Posterior cingulate gyrus (tissue), 11 donors: ENCODE measurements at regions of chr11 and their contacts with region 1.

Region 1: GRCh38 chr11:44727373-44728287 is 868 bp downstream of the TSPAN18 start:
- DNase-seq: peak; percentile 61 to 97 (median 79)

Region 2: DNA sequence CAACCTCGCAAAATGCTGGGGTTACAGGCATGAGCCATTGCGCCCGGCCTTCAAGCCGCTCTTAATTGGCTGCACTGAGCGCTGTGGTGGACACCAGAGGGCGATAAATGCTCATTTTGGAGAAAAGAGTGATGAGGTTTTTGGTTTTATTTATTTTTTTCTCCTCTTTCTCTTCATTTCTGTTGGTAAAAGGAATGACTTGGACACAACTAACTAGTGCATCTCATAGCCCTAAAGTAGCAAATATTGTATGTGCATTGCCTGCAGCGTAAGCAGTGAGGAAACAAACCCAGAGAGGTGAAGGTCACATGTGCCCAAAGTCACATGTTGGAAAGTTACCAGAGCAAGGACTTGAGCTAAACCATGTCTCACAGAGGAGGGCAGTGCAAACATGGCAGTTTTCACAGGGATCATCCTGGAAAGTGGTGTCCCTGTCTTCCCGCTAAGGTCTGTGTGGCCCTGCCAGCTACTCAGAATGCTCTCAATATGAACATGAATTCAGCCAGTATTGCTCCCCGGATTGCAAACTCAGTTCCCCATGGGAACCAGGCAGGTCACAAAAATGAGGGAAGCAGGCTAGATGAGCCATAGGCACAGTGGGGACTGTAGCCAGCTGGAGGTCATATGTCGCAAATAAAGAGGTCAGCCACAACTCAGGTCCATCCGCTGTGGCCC is 170.8 kb before region 1 on chr11:
- intact Hi-C with region 1: loop called (anchors 5 kb)
- DNase-seq: peak; percentile 40 to 93 (median 72)

Region 3: DNA sequence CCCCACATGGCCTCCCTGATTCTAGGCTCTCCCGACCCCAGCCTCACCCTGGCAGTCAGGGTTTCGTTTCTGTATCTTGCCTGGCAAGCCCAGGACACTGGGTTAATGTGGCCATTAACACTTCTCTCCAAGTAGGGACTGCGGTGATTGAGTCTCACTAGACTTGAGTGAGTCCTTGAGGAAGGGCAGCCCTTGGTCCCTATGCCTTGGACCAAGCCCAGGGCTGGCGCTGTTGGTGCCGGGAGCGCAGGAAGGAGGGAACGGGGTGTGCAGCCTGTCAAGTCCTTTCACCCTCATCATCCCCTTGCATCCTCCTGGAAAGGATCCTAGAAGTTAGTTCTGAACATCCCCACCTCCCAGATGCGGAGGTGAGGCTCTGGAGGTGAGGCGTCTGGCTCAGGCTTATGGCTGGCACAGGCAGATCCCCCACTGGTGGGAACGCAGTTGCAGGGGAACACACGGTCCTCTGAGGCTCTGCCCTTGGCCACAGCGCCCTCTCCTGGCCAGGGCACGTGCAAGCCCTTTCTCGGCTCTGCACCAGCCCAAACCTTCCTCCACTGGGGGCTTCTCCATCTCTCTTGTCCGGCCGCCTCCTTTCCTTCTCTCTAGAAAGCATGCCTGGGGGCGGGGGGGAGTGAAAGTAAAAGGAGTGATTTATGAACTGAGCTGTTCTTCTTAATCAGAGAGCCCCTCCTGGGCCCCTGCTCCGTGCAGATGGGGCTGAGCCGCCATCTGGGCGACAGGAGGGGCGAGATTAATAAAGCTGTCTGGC is 166.4 kb after region 1 on chr11:
- intact Hi-C with region 1: loop called (anchors 5 kb)
- DNase-seq: peak in 9 of 10 donors; percentile 40 to 96 (median 70)

Region 4: GRCh38 chr11:44911029-44911814 is 183.6 kb after region 1 on chr11:
- intact Hi-C with region 1: loop called (anchors 5 kb)
- DNase-seq: peak; percentile 53 to 95 (median 88)